PC-3 (cell line): ENCODE measurements at regions of chr1 and their contacts with region 1.

Region 1: DNA sequence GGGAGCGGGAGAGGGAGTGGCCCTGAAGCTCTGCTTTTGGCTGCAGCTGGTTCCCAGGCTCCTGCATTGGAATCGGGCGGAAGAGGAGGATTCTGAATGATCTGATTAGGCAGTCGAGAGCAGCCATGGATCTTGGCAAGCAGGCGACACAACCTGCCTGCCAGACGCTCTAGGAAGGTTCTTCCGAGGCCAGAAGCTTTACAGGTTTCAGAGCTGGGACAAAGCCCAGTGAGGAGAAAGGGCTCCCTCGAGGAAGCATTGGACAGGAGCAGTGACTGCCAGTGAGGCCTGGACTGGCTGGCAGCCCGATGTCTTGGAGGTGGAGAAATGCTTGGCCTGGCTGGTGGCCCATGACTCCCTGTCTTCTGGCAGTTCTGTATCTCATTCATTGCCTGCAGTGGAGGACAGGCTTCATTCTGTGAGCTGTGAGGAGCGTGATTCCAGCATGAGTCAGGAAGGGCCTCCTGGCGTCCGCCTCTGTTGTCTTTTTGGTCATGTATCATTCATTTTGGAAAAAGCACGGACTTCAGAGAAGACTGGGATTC is 132.7 kb upstream of the IPO9 start:
- DNase-seq: peak; percentile 92
- ATAC-seq: peak; percentile 96
- H3K4me3 ChIP-seq: no peak overlapping the region
- H3K27ac ChIP-seq: peak overlapping the region; percentile 57
- H3K4me1 ChIP-seq: peaks cover 21% of the 10 kb centered on the region
- H3K27me3 ChIP-seq: no peaks in the 10 kb centered on the region
- CTCF ChIP-seq: no peak

Region 2: DNA sequence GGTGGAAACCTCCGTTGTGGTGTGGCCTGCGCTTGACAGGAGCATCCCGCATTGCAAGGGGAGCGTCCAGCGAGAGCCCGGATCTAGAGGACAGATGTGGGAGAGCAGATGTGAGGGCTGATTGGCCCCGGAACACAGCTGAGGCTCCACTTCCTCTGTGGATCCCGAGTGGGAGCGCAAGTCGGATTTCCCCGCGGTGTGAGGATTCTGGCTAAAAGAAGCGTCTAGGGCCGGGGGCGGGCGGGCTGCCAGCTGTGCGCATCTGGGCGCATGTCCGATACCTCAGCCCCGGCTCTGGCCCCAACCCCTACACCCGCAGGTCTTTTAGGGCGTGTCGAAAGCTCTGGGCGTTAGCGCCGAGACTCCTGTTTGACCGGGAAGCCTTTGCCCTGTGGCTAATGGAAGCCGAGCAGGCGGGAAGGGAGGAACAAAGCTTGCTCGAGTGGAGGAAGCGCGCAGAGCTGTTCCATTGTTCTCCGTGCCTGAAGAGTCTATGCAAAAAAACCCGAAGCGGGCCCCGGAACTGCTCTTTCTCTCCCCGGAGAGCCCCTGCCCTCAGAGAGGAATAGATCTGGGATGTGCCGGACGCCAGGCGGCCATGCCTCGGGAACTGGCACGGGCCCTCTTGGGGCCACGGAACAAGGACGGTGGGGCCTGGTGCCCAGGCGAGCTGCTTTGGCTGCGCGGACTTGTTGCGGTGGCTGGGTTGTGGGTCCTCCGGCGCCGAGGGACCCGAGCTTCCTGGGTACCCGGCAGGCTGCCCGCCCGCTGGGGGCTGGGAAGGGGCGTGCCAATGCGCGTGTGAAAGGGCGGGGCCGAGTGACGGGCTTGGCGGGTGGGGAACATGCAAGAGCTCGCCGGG is 46.3 kb before region 1 on chr1:
- CTCF ChIA-PET with region 1: interaction called, 8 read pairs
- POLR2A ChIA-PET with region 1: no interaction called
- intact Hi-C with region 1: loop called (anchors 2 kb)
- DNase-seq: peak; percentile 22
- ATAC-seq: peak; percentile 25
- H3K4me3 ChIP-seq: peak overlapping the region; percentile 71
- H3K27ac ChIP-seq: no peak overlapping the region
- H3K4me1 ChIP-seq: peaks cover 17% of the 10 kb centered on the region; the same call in 1 of the 2 replicates
- H3K27me3 ChIP-seq: no peaks in the 10 kb centered on the region
- CTCF ChIP-seq: no peak

Region 3: DNA sequence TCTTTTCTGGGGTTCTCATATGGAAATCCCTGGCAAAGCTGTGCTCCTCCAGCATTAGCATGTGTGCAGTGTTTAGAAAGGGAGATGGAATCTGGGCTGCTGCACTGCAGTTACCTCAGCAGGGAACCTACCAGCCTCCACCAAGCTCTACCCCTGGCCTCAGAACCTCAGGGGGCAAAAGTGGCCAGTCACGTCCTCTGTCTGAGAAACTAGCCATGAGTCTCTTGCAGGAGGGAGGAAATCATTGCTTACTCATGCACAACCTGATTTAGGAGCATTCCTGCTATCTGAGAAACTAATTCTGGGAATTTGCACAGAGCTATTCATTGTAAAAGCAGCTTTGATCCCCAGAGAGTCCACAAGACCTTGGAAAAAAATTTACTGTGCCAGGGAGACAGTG is 52.0 kb after region 1 on chr1:
- CTCF ChIA-PET with region 1: no interaction called
- POLR2A ChIA-PET with region 1: no interaction called
- intact Hi-C with region 1: no loop called
- DNase-seq: peak; percentile 40
- ATAC-seq: peak; percentile 35; the same call in 1 of the 2 replicates
- H3K4me3 ChIP-seq: no peak overlapping the region
- H3K27ac ChIP-seq: no peak overlapping the region
- H3K4me1 ChIP-seq: peaks cover 27% of the 10 kb centered on the region
- H3K27me3 ChIP-seq: no peaks in the 10 kb centered on the region
- CTCF ChIP-seq: no peak